HCT116 (cell line): ENCODE measurements at regions of chr2 and their contacts with region 1.

Region 1: GRCh38 chr2:231104115-231104713 is 20.6 kb downstream of the HTR2B start:
- DNase-seq: peak; percentile 27
- ATAC-seq: peak; percentile 80
- H3K4me3 ChIP-seq: no peak overlapping the region
- H3K27ac ChIP-seq: no peak overlapping the region
- H3K4me1 ChIP-seq: peaks cover 7 to 17% of the 10 kb centered on the region in 2 experiments
- H3K27me3 ChIP-seq: no peaks in the 10 kb centered on the region
- CTCF ChIP-seq: peak; percentile 64 to 79 (median 71)
- POLR2A ChIP-seq: no peak
- RAD21 ChIP-seq: peak; percentile 76

Region 2: GRCh38 chr2:230824406-230824978 is 279.7 kb before region 1 on chr2:
- CTCF ChIA-PET with region 1: interaction called, 6 read pairs
- POLR2A ChIA-PET with region 1: no interaction called
- RAD21 ChIA-PET with region 1: no interaction called
- intact Hi-C with region 1: loop called (anchors 5 kb)
- DNase-seq: peak; percentile 77
- ATAC-seq: peak; percentile 93
- H3K4me3 ChIP-seq: peak overlapping the region in 1 of 2 experiments; percentile 13; a peak in 1 of 4 replicates
- H3K27ac ChIP-seq: no peak overlapping the region
- H3K4me1 ChIP-seq: peaks cover 0 to 3% of the 10 kb centered on the region in 2 experiments; a peak in 1 of 4 replicates
- H3K27me3 ChIP-seq: no peaks in the 10 kb centered on the region
- CTCF ChIP-seq: peak; percentile 50 to 85 (median 71)
- POLR2A ChIP-seq: no peak
- RAD21 ChIP-seq: peak; percentile 93

Region 3: GRCh38 chr2:231124838-231125568 is 20.8 kb after region 1 on chr2 and contains the start of gene HTR2B:
- CTCF ChIA-PET with region 1: interaction called, 12 read pairs
- POLR2A ChIA-PET with region 1: no interaction called
- RAD21 ChIA-PET with region 1: no interaction called
- intact Hi-C with region 1: no loop called
- DNase-seq: no peak
- ATAC-seq: no peak
- H3K4me3 ChIP-seq: no peak within 1 kb of the TSS
- H3K27ac ChIP-seq: no peak within 1 kb of the TSS
- H3K4me1 ChIP-seq: no peaks in the 10 kb centered on the region
- H3K27me3 ChIP-seq: no peaks in the 10 kb centered on the region
- CTCF ChIP-seq: no peak
- POLR2A ChIP-seq: no peak
- RAD21 ChIP-seq: no peak
- total RNA-seq, gene HTR2B: not detected

Region 4: GRCh38 chr2:231191896-231192872 is 88.0 kb after region 1 on chr2:
- CTCF ChIA-PET with region 1: interaction called, 12 read pairs
- POLR2A ChIA-PET with region 1: no interaction called
- RAD21 ChIA-PET with region 1: interaction called in 1 of 2 experiments, 4 read pairs
- intact Hi-C with region 1: loop called (anchors 1 kb)
- DNase-seq: no peak
- ATAC-seq: peak; percentile 97
- H3K4me3 ChIP-seq: no peak overlapping the region
- H3K27ac ChIP-seq: no peak overlapping the region
- H3K4me1 ChIP-seq: no peaks in the 10 kb centered on the region
- H3K27me3 ChIP-seq: no peaks in the 10 kb centered on the region
- CTCF ChIP-seq: peak; percentile 40 to 71 (median 63); a peak in 5 of 6 replicates
- POLR2A ChIP-seq: no peak
- RAD21 ChIP-seq: peak; percentile 67

Region 5: DNA sequence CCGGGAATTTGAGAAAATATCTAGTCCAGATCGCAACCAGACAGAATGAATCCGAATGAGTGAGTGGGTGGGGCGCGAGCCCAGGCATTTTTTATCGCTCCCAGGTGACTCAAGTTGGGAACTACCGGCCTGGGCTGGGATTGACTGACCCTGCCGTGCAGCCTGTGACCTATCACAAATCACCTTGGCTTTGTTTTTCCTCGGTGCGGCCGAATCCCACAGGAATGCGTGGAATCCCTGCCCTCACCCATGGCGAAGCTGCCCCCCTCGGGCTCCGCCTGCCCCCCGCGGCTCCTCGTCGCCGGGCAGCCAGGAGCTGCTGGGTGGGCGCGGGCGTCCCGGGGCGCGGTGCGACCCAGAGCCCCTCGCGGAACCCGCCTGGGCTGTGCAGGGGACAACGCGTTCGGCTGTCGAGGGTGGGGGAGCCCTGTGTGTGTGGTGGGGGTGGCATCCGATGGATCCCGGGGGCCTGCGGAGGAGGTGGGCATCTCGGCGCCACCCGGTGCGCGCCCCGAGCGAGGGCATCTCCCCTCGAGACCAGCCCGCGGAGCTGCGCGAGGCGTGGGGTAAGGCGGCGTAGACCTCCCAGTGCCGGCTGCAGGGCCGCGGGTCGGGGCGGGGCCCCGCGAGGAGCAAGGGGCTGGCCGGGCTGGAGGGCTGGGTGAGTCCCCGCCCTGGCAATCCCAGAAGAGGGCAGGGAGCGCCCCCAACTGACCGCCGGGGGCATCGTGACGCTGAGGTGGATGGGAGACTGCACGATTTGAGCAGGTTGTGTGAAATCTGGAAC is 307.8 kb after region 1 on chr2:
- CTCF ChIA-PET with region 1: interaction called, 4 read pairs
- POLR2A ChIA-PET with region 1: no interaction called
- RAD21 ChIA-PET with region 1: no interaction called
- intact Hi-C with region 1: loop called (anchors 1 kb)
- DNase-seq: peak; percentile 31
- ATAC-seq: peak; percentile 96
- H3K4me3 ChIP-seq: peak overlapping the region; percentile 39 to 59
- H3K27ac ChIP-seq: peak overlapping the region; percentile 45; the same call in 1 of the 2 replicates
- H3K4me1 ChIP-seq: peaks cover 0 to 13% of the 10 kb centered on the region in 2 experiments; a peak in 1 of 4 replicates
- H3K27me3 ChIP-seq: no peaks in the 10 kb centered on the region
- CTCF ChIP-seq: peak; percentile 63 to 76 (median 72); a peak in 5 of 6 replicates
- POLR2A ChIP-seq: no peak
- RAD21 ChIP-seq: peak; percentile 85

Region 6: GRCh38 chr2:231541645-231542044 is 437.4 kb after region 1 on chr2:
- CTCF ChIA-PET with region 1: no interaction called
- POLR2A ChIA-PET with region 1: no interaction called
- RAD21 ChIA-PET with region 1: no interaction called
- intact Hi-C with region 1: no loop called
- DNase-seq: no peak
- ATAC-seq: peak; percentile 80
- H3K4me3 ChIP-seq: no peak overlapping the region
- H3K27ac ChIP-seq: no peak overlapping the region
- H3K4me1 ChIP-seq: no peaks in the 10 kb centered on the region
- H3K27me3 ChIP-seq: no peaks in the 10 kb centered on the region
- CTCF ChIP-seq: peak in 2 of 3 experiments; percentile 48 to 53; a peak in 4 of 6 replicates
- POLR2A ChIP-seq: no peak
- RAD21 ChIP-seq: no peak